IMR-90 (cell line): ENCODE measurements at regions of chr6 and their contacts with region 1.

Region 1: DNA sequence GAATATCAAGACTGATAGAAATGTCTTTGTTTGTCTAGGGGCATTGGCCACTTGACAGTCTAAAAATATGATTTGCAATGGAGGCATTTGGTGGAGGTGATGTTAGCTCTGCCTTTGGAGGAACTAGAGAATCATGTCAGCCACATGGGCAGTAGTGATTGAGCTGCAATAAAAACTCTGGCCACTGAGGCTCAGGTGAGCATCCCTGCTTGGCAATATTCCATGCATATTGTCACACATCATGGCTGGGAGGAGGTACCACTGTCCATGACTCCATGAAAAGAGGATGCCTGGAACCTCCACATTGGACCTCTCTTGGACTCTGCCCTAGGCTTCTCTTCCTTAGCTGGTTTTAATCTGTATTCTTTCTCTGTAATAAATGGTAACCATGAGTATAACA is 10.6 kb upstream of the CD83 start:
- DNase-seq: no peak
- ATAC-seq: no peak
- H3K4me3 ChIP-seq: no peak overlapping the region
- H3K27ac ChIP-seq: no peak overlapping the region
- H3K4me1 ChIP-seq: no peaks in the 10 kb centered on the region
- H3K27me3 ChIP-seq: peaks cover 42% of the 10 kb centered on the region
- CTCF ChIP-seq: no peak
- POLR2A ChIP-seq: no peak
- RAD21 ChIP-seq: no peak

Region 2: DNA sequence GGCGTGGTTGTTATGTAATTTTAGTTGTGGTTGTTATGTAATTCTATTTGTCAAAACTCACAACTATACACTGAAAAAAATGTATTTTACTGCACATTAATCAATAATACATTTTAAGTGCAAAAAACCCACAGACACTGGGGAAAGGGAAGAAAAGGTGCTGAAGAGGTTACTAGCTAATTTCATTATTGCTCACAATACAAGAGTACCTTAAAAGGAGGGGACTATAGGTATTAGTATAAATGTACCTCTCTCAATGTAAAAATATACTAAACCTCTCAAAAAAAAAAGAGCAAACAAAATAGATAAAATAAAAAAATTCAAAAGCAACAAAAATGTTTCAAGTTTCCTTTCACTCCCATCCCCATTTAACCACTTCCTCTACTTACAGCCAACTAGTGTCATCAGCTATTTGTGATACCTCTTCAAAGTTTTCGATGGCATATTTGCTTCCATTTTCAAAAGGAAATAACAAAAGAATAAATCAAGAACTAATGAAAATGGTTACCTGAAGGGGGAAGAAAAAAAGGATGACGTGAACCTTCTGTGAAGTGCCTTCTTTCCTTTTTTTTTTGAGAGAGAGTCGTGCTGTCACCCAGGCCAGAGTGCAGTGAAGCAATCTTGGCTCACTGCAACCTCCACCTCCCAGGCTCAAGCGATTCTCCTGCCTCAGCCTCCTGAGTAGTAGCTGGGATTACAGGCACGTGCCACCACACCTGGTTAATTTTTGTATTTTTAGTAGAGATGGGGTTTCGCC is 425.5 kb before region 1 on chr6:
- CTCF ChIA-PET with region 1: interaction called, 10 read pairs
- POLR2A ChIA-PET with region 1: no interaction called
- dilution Hi-C with region 1: no loop called
- in situ Hi-C with region 1: no loop called
- intact Hi-C with region 1: no loop called
- DNase-seq: no peak
- ATAC-seq: no peak
- H3K4me3 ChIP-seq: no peak overlapping the region
- H3K27ac ChIP-seq: no peak overlapping the region
- H3K4me1 ChIP-seq: no peaks in the 10 kb centered on the region
- H3K27me3 ChIP-seq: no peaks in the 10 kb centered on the region
- CTCF ChIP-seq: no peak
- POLR2A ChIP-seq: no peak
- RAD21 ChIP-seq: no peak